ENCODE measurements at regions of chr4 and their contacts with region 1.

Region 1: DNA sequence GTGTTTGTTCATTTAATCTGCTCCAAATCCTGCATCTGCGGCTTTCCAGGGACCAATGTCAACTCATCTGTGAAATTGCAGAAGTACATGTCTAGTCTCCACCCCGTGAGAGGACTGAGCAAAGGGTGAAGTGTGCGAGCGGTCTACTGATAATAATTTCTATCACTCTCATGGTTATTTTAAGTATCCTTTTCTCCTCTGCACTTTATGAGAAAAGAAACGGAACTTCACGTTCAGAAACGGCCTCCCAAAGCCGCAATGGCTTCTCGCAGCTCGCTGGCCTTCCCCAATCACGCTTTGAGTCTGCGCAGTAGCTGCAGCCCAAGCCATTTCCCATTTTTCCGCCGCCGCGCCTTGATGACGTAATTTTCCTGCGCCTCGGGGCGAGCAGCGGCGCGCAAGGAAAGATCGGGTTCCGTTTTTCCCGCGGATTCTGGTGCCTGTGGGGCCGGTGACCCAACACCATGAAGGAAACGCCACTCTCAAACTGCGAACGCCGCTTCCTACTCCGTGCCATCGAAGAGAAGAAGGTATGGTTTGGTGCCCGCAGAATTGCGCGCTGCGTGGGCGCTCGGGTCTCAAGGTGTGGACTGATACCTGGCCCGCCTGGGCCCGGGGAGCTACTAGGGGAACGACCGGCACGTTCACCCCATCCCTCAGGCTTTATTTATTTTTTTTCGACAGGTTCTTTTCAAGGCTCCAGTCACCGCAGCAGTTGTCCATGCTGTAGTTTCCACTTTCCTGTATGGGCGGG is at the start of gene EXOSC9:
- DNase-seq: peak; percentile 59 to 96
- H3K4me3 ChIP-seq: peak within 1 kb of the TSS; percentile 78 to 90
- H3K27ac ChIP-seq: peak within 1 kb of the TSS; percentile 70 to 85
- H3K4me1 ChIP-seq: peaks cover 0 to 8% of the 10 kb centered on the region in 2 donors
- H3K27me3 ChIP-seq: no peaks in the 10 kb centered on the region
- CTCF ChIP-seq: no peak
- total RNA-seq, gene EXOSC9: 11.9 TPM

Region 2: GRCh38 chr4:121308328-121308663 is 492.8 kb before region 1 on chr4:
- intact Hi-C with region 1: no loop called
- DNase-seq: no peak
- H3K4me3 ChIP-seq: no peak overlapping the region
- H3K27ac ChIP-seq: no peak overlapping the region
- H3K4me1 ChIP-seq: no peaks in the 10 kb centered on the region
- H3K27me3 ChIP-seq: no peaks in the 10 kb centered on the region
- CTCF ChIP-seq: no peak

Region 3: DNA sequence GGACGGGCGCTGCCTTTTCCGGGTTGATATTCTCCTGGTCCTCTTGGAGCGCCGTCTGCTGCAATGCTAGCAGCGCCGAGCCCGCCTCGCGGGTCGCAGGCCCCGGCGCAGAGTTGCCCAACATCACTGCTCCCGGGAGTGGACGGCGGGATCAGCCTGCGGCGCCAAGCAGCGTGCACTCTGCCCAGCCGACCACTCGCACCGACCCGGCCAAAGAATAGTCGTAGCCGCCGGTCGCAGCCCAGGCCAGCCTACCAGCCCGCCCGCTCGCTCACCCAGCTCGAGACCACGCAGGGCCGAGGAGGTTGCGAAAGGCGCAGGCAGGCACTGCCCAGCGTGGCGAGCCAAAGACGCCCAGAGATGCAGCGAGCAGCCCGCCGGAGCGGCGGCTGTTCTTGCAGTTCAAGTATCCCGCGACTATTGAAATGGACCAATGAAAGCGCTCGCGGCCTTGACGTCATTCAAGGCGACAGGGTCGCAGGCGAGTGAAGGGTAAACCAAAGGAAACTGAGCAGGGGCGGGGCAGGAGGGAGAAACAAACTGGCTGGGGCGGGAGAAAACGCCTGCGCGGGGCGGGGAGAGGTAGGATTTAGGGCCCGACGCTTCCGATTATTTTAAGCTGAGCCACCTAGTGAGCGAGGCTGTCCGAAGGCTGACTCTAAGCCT is 22.5 kb after region 1 on chr4 and contains the start of gene CCNA2:
- intact Hi-C with region 1: loop called (anchors 1 kb)
- DNase-seq: peak; percentile 91 to 99
- H3K4me3 ChIP-seq: peak within 1 kb of the TSS; percentile 68 to 76
- H3K27ac ChIP-seq: peak within 1 kb of the TSS; percentile 51 to 73
- H3K4me1 ChIP-seq: peaks cover 4 to 6% of the 10 kb centered on the region in 2 donors
- H3K27me3 ChIP-seq: no peaks in the 10 kb centered on the region
- CTCF ChIP-seq: peak in 1 of 3 experiments; percentile 16
- total RNA-seq, gene CCNA2: not detected

Measured in ascending aorta (tissue), 2 donors.